Calu3 (cell line): ENCODE measurements at regions of chr11 and their contacts with region 1.

Region 1: DNA sequence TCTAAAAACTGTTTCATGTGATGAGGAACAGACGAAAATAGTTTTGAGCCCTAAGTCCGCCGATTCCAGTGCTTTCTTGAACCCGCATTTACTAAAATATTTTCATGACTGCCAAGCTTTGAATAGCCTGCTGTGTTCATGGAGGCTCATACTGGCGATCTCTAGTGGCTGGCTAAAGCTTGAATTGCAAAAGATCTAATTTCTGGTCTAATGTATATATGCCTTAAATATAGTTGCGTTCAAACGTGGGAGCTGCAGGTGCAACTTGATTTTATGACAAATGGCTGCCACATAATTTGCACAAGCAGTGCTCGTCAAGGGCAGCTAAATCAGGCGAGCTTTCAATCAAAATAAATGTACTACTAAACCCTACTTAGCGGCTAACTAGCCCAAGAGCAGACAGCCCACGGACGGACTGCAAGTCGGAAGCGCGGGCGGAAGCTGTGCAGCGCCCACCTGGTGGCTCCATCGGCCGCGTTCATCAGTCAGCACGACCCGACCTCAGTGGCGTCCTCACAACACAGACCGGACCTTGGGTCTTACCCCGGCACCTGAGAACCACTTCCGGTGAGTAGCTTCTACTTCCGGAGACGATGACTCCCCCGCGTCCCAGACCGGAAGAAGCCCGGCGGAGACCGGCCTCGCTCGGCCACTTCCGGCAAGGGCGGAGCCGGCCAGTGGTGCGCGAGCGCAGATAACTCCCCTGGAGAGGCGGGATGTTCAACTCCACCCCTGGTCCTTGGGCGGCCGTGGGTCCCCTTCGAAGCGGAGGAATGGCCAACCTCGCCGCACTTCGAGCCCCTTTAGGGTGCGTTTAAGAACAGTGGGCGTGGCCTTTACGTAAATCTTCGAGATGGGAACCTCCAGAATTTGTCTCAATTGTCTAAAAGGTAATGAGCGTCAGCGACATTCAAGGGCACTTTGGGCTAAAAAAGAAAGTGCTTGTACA is 6.1 kb downstream of the RPL27A start:
- DNase-seq: peak; percentile 94
- H3K4me3 Mint-ChIP-seq: peak overlapping the region; percentile 63
- H3K27ac Mint-ChIP-seq: peak overlapping the region; percentile 90
- H3K4me1 Mint-ChIP-seq: peaks cover 29% of the 10 kb centered on the region
- H3K27me3 Mint-ChIP-seq: no peaks in the 10 kb centered on the region
- CTCF ChIP-seq: no peak

Region 2: DNA sequence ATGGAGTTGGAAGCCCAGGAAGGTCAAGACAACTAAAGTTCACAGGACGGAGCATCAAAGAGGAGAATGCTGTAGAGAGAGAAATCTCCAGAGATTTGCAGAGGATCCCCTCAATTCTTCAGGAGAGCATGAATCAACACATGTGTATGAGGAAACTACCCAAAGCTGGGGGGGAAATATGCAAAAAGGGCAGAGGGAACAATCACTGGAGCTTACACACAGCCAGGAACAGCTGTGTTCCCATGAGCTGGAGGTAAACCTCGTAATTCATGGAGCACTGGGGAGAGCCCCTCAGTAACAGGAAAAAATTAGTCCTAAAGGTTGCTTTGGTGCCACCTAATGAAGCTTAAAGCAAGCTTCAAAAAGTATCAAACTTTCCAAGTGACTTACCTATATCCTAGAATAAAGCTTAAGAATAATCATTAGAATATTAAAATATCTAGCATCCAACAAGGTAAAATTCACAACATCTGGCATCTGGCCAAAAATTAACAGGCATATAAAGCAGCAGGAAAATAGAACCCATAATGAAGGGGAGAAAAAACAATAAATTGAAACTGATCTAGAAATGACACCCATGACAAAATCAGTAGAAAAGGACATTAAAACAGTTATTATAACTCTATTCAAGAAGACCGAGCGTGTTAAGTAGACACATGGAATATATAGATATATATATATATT is 228.8 kb before region 1 on chr11:
- CTCF ChIA-PET with region 1: no interaction called
- intact Hi-C with region 1: no loop called
- DNase-seq: no peak
- H3K4me3 Mint-ChIP-seq: no peak overlapping the region
- H3K27ac Mint-ChIP-seq: no peak overlapping the region
- H3K4me1 Mint-ChIP-seq: no peaks in the 10 kb centered on the region
- H3K27me3 Mint-ChIP-seq: peaks cover 13% of the 10 kb centered on the region
- CTCF ChIP-seq: no peak

Region 3: GRCh38 chr11:8699903-8700302 is 11.2 kb after region 1 on chr11:
- CTCF ChIA-PET with region 1: interaction called, 5 read pairs
- intact Hi-C with region 1: loop called (anchors 1 kb)
- DNase-seq: peak; percentile 79
- H3K4me3 Mint-ChIP-seq: no peak overlapping the region
- H3K27ac Mint-ChIP-seq: peak overlapping the region; percentile 82
- H3K4me1 Mint-ChIP-seq: peaks cover 20% of the 10 kb centered on the region
- H3K27me3 Mint-ChIP-seq: no peaks in the 10 kb centered on the region
- CTCF ChIP-seq: no peak

Region 4: GRCh38 chr11:8717876-8718753 is 29.4 kb after region 1 on chr11:
- CTCF ChIA-PET with region 1: interaction called, 3 read pairs
- intact Hi-C with region 1: loop called (anchors 5 kb)
- DNase-seq: peak; percentile 43
- H3K4me3 Mint-ChIP-seq: peak overlapping the region; percentile 36
- H3K27ac Mint-ChIP-seq: peak overlapping the region; percentile 88
- H3K4me1 Mint-ChIP-seq: peaks cover 59% of the 10 kb centered on the region
- H3K27me3 Mint-ChIP-seq: no peaks in the 10 kb centered on the region
- CTCF ChIP-seq: no peak

Region 5: GRCh38 chr11:8768625-8769333 is 80.1 kb after region 1 on chr11:
- CTCF ChIA-PET with region 1: no interaction called
- intact Hi-C with region 1: loop called (anchors 5 kb)
- DNase-seq: peak; percentile 12
- H3K4me3 Mint-ChIP-seq: no peak overlapping the region
- H3K27ac Mint-ChIP-seq: no peak overlapping the region
- H3K4me1 Mint-ChIP-seq: peaks cover 21% of the 10 kb centered on the region
- H3K27me3 Mint-ChIP-seq: no peaks in the 10 kb centered on the region
- CTCF ChIP-seq: no peak

Region 6: DNA sequence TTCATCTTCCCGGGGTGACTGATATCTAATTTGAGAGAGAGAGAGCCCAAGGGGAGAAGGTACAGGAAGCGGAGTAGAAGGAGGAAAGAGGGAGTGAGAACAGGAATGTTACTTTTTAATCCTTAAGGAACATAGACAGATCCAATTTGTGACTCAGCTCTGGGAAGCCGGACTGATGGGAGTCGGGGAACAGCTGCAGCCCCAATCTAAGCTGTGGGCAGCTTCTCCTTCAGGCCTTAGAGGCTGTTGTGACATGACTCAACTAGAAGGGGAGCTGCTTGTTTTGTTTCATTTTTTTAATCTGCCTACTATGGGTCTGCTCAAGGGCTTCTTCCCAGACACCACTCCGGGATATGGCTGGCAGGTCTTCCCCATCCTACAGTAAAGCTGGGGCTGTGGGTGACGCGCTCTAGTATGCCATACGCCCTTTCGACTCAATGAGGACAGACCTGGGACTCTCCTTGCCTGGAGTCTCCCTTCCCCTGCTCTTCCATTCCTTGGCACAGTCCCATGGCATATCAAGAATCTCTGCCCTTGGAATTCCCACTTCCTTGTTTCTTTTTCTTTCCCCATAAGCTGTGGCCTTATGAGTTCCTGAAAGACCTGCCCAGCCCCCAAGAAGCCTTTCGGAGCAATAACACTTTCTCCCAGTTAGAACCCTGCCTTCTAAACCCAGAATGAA is 119.0 kb after region 1 on chr11:
- CTCF ChIA-PET with region 1: interaction called, 4 read pairs
- intact Hi-C with region 1: loop called (anchors 1 kb)
- DNase-seq: no peak
- H3K4me3 Mint-ChIP-seq: peak overlapping the region; percentile 82
- H3K27ac Mint-ChIP-seq: peak overlapping the region; percentile 45
- H3K4me1 Mint-ChIP-seq: peaks cover 24% of the 10 kb centered on the region
- H3K27me3 Mint-ChIP-seq: no peaks in the 10 kb centered on the region
- CTCF ChIP-seq: no peak

Region 7: DNA sequence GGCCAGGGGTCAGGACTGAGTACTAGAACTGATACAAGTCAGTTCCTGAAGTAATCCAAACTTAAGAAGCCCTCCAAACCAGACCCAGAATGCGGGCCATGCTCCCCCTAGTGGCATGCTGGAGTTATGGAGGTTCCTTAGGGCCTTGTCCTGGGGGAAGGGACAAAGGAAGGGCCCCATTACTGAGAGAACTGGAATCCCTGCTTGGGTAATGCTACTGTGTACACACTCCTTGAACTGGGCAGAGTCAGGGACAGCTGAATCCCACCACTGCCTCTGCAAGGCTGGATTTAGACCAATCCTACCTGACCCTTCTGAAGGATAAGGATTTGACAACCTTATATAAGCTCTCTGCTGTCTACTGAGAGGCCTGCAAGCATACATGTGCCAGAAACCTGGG is 125.0 kb after region 1 on chr11:
- CTCF ChIA-PET with region 1: interaction called, 4 read pairs
- intact Hi-C with region 1: loop called (anchors 1 kb)
- DNase-seq: peak; percentile 84
- H3K4me3 Mint-ChIP-seq: no peak overlapping the region
- H3K27ac Mint-ChIP-seq: no peak overlapping the region
- H3K4me1 Mint-ChIP-seq: peaks cover 5% of the 10 kb centered on the region
- H3K27me3 Mint-ChIP-seq: no peaks in the 10 kb centered on the region
- CTCF ChIP-seq: peak; percentile 74

Region 8: GRCh38 chr11:8964324-8965320 is 275.9 kb after region 1 on chr11 and contains the start of gene TMEM9B:
- CTCF ChIA-PET with region 1: interaction called, 17 read pairs
- intact Hi-C with region 1: loop called (anchors 2 kb)
- DNase-seq: peak; percentile 92
- H3K4me3 Mint-ChIP-seq: peak within 1 kb of the TSS; percentile 83
- H3K27ac Mint-ChIP-seq: peak within 1 kb of the TSS; percentile 87
- H3K4me1 Mint-ChIP-seq: peaks cover 22% of the 10 kb centered on the region
- H3K27me3 Mint-ChIP-seq: no peaks in the 10 kb centered on the region
- CTCF ChIP-seq: no peak
- total RNA-seq, gene TMEM9B: 31.3 and 31.5 TPM in 2 replicates

Region 9: GRCh38 chr11:8980485-8980884 is 291.8 kb after region 1 on chr11:
- CTCF ChIA-PET with region 1: no interaction called
- intact Hi-C with region 1: no loop called
- DNase-seq: no peak
- H3K4me3 Mint-ChIP-seq: no peak overlapping the region
- H3K27ac Mint-ChIP-seq: no peak overlapping the region
- H3K4me1 Mint-ChIP-seq: no peaks in the 10 kb centered on the region
- H3K27me3 Mint-ChIP-seq: peaks cover 25% of the 10 kb centered on the region
- CTCF ChIP-seq: no peak